ENCODE measurements at regions of chr17 and their contacts with region 1.

Region 1: DNA sequence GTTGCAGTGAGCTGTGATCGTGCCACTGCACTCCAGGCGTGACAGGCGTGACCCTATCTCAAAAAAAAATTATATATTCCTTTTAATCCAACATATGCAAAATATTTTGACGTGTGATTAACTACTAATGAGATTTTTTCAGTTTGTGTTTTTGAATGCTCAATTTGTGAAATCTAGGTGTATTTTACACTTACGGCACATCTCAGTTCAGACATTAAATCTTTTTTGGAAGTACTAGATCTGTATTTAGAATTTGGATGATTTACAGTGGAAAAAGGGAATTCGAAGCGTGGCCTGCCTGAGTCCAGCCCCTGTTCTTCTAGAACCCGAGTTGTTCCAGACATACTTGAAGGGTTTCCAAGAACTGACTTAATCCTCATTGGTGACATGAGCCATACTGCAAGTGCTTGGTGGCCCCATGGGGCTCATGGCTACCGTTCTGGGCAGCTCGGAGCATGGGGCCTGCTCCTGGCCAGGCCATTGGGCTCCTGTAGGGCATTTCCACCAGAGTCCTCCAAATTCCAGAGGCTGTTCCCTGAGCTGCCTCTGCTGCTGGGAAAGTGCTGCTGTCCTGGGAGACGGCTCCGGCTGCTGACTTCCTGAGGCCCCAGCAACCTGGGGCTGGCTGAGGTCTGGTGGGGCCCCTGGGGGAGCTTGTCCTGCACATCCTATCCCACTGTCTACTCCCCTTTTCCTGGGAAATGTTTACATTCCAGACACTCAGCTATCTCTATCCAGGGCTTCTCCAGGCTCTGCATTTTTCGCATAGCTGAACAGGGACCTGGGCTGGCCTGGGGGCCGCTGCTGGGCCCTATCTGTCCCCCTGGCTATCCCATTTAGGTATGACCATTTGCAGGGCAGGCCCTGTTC is 27.2 kb downstream of the LLGL2 start:
- DNase-seq: no peak
- ATAC-seq: no peak
- H3K4me3 ChIP-seq: no peak overlapping the region
- H3K27ac ChIP-seq: no peak overlapping the region
- H3K4me1 ChIP-seq: peaks cover 0 to 4% of the 10 kb centered on the region in 2 donors
- H3K27me3 ChIP-seq: no peaks in the 10 kb centered on the region
- CTCF ChIP-seq: no peak
- POLR2A ChIP-seq: no peak

Region 2: GRCh38 chr17:75571197-75571873 is 18.7 kb after region 1 on chr17:
- in situ Hi-C with region 1: no loop called
- intact Hi-C with region 1: no loop called
- DNase-seq: no peak
- ATAC-seq: peak; percentile 33 to 47
- H3K4me3 ChIP-seq: no peak overlapping the region
- H3K27ac ChIP-seq: no peak overlapping the region
- H3K4me1 ChIP-seq: no peaks in the 10 kb centered on the region
- H3K27me3 ChIP-seq: no peaks in the 10 kb centered on the region
- CTCF ChIP-seq: no peak
- POLR2A ChIP-seq: no peak

Region 3: GRCh38 chr17:75601057-75602051 is 48.7 kb after region 1 on chr17:
- in situ Hi-C with region 1: no loop called
- intact Hi-C with region 1: loop called (anchors 1 kb)
- DNase-seq: no peak
- ATAC-seq: peak; percentile 43 to 58
- H3K4me3 ChIP-seq: no peak overlapping the region
- H3K27ac ChIP-seq: no peak overlapping the region
- H3K4me1 ChIP-seq: no peaks in the 10 kb centered on the region
- H3K27me3 ChIP-seq: no peaks in the 10 kb centered on the region
- CTCF ChIP-seq: peak; percentile 28 to 59 (median 55)
- POLR2A ChIP-seq: no peak

Region 4: GRCh38 chr17:75625813-75626486 is 73.3 kb after region 1 on chr17:
- in situ Hi-C with region 1: no loop called
- intact Hi-C with region 1: no loop called
- DNase-seq: no peak
- ATAC-seq: no peak
- H3K4me3 ChIP-seq: no peak overlapping the region
- H3K27ac ChIP-seq: no peak overlapping the region
- H3K4me1 ChIP-seq: peaks cover 0 to 9% of the 10 kb centered on the region in 2 donors
- H3K27me3 ChIP-seq: no peaks in the 10 kb centered on the region
- CTCF ChIP-seq: peak in 2 of 5 experiments; percentile 27 to 42
- POLR2A ChIP-seq: no peak